HCT116 (cell line): ENCODE measurements at regions of chr16 and their contacts with region 1.

Region 1: DNA sequence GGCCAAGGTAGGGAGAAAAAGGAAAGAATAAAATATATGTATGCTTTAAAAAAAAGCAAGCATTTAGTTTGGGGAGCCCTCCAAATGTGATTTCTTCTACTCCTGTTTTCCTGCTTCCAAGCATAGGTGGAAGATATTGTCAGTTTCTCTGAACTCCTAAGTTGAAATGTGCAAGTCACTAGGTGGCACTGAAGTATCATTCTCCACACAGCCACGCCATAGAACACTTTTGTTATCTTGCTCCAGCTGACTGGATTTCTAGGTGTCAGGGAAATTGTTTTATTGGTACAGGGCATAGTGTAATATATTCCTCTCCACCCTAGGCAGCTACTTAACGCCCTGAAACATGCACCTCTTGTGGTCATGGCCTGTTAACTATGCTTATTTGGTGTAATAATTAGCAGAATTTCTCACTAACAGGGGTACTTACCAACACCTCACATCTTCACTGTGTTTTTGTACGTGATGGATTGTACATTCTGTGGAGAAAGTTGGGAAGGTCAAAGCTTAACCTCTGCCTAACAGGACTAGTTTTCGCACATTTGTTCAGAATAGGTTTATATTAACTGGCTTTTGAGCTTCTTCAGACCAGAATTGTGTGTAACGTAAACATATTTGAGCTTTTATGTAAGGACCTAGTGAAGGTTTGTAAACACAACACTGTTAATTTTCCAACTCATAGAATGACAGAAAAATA is 69.3 kb downstream of the FTO start:
- DNase-seq: no peak
- ATAC-seq: peak; percentile 51
- H3K4me3 ChIP-seq: no peak overlapping the region
- H3K27ac ChIP-seq: no peak overlapping the region
- H3K4me1 ChIP-seq: peaks cover 32 to 40% of the 10 kb centered on the region in 2 experiments
- H3K27me3 ChIP-seq: no peaks in the 10 kb centered on the region
- CTCF ChIP-seq: peak; percentile 46 to 68 (median 56); a peak in 4 of 6 replicates
- POLR2A ChIP-seq: no peak
- RAD21 ChIP-seq: peak; percentile 91

Region 2: DNA sequence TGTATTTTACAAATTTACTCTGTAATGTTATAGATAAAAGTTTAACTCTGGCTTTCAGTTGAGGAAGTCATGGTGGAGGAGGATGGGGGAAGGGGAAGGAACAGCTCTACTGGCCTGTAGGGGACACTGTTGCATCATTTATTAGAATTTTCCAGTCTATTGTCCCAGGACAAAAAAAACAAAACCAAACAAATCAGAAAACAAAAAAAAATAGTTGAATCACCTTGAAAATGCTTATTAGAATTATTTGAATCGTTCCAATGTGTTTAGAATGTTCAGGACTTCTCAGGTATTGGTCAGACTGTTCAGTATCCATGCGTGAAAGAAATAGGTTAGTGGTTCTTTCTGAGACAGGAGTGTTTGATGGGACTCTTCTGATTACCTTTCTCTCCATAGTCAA is 172.7 kb after region 1 on chr16:
- CTCF ChIA-PET with region 1: interaction called, 3 read pairs
- POLR2A ChIA-PET with region 1: no interaction called
- RAD21 ChIA-PET with region 1: no interaction called
- intact Hi-C with region 1: loop called (anchors 1 kb)
- DNase-seq: peak; percentile 8
- ATAC-seq: peak; percentile 65; the same call in 1 of the 2 replicates
- H3K4me3 ChIP-seq: no peak overlapping the region
- H3K27ac ChIP-seq: no peak overlapping the region
- H3K4me1 ChIP-seq: no peaks in the 10 kb centered on the region
- H3K27me3 ChIP-seq: no peaks in the 10 kb centered on the region
- CTCF ChIP-seq: peak; percentile 36 to 86 (median 66); a peak in 5 of 6 replicates
- POLR2A ChIP-seq: no peak
- RAD21 ChIP-seq: peak; percentile 68

Region 3: DNA sequence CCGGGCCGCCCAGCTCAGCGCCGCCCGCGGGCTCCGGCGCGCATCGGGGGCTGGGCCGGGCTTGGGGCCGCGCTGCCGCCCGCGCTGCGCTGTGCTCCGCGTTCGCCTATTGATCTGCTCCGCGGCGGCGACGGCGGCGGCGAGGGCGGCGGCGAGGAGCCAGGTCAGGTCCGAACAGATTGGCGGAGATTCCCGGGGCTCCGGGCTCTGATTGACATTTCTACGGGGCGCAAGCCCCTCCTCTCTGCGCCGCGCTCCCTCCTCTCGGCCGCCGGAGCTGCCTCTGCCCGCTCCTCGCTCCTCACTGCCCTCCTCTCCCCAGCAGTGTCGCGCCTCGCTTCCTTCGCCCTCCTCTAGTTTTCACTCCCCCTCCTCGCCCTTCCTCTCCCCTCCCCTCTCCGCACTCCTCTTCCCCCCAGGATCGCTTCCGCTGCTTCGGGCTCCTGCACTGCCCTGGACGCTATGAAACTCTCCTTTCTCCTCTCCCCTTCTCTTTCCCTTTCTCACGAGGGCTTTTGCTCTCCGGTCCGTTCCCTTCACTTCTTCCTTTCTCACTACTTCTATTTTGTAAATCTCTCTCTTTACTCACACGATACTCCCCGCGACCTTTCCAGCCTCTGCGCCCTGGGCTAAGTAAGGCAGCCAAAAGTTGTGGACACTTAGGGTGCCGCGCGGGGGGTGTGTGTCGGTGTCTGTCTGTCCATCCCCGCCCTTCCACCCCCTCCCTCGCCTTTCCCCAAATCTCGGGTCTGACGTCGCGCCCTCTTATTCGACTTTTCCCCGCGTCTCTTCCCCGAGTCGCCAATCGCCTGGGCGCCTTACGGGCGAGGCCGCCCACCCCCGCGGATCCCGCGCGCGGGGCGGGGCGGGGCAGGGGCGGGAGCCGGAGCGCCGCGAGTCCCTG is 513.0 kb after region 1 on chr16 and contains the start of gene IRX3:
- CTCF ChIA-PET with region 1: no interaction called
- POLR2A ChIA-PET with region 1: no interaction called
- RAD21 ChIA-PET with region 1: no interaction called
- intact Hi-C with region 1: loop called (anchors 10 kb)
- DNase-seq: peak; percentile 66
- ATAC-seq: peak; percentile 90
- H3K4me3 ChIP-seq: peak within 1 kb of the TSS; percentile 56 to 71
- H3K27ac ChIP-seq: peak within 1 kb of the TSS; percentile 60; the same call in 1 of the 2 replicates
- H3K4me1 ChIP-seq: peaks cover 7 to 22% of the 10 kb centered on the region in 2 experiments
- H3K27me3 ChIP-seq: no peaks in the 10 kb centered on the region
- CTCF ChIP-seq: no peak
- POLR2A ChIP-seq: no peak
- RAD21 ChIP-seq: no peak
- total RNA-seq, gene IRX3: 2.0 TPM

Region 4: GRCh38 chr16:54812229-54812628 is 1038.9 kb after region 1 on chr16:
- CTCF ChIA-PET with region 1: no interaction called
- POLR2A ChIA-PET with region 1: no interaction called
- RAD21 ChIA-PET with region 1: no interaction called
- intact Hi-C with region 1: loop called (anchors 5 kb)
- DNase-seq: no peak
- ATAC-seq: no peak
- H3K4me3 ChIP-seq: no peak overlapping the region
- H3K27ac ChIP-seq: no peak overlapping the region
- H3K4me1 ChIP-seq: no peaks in the 10 kb centered on the region
- H3K27me3 ChIP-seq: peaks cover 44% of the 10 kb centered on the region
- CTCF ChIP-seq: peak in 2 of 3 experiments; percentile 16 to 24; a peak in 1 of 6 replicates
- POLR2A ChIP-seq: no peak
- RAD21 ChIP-seq: peak; percentile 27; the same call in 1 of the 2 replicates

Region 5: GRCh38 chr16:55021595-55022475 is 1248.5 kb after region 1 on chr16:
- CTCF ChIA-PET with region 1: interaction called, 5 read pairs
- POLR2A ChIA-PET with region 1: no interaction called
- RAD21 ChIA-PET with region 1: no interaction called
- intact Hi-C with region 1: loop called (anchors 10 kb)
- DNase-seq: peak; percentile 67
- ATAC-seq: peak; percentile 97
- H3K4me3 ChIP-seq: no peak overlapping the region; a peak in 1 of 4 replicates
- H3K27ac ChIP-seq: peak overlapping the region; percentile 27; the same call in 1 of the 2 replicates
- H3K4me1 ChIP-seq: peaks cover 7 to 12% of the 10 kb centered on the region in 2 experiments; a peak in 3 of 4 replicates
- H3K27me3 ChIP-seq: no peaks in the 10 kb centered on the region
- CTCF ChIP-seq: peak; percentile 34 to 67 (median 66); a peak in 5 of 6 replicates
- POLR2A ChIP-seq: no peak
- RAD21 ChIP-seq: peak; percentile 30; the same call in 1 of the 2 replicates

Region 6: DNA sequence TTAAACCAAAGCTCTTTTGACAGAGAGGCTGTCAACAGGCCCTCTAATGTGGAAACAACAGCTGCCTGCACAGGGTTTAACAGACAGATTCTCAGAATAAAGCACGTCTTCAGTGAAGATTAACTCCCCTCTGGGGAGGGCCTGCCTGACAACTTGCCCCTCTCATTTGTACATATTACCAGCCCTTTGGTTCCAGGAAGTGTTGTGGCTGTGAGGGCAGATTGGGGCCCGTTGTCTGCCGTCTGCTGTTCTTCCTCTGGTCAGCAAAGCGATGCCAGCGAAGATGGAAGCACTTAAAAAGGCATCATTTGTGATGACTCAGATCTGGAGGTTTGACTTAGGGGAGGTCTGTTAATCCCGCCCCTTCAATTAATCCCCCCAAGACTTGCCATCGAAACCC is 1373.7 kb after region 1 on chr16:
- CTCF ChIA-PET with region 1: no interaction called
- POLR2A ChIA-PET with region 1: no interaction called
- RAD21 ChIA-PET with region 1: no interaction called
- intact Hi-C with region 1: no loop called
- DNase-seq: no peak
- ATAC-seq: no peak
- H3K4me3 ChIP-seq: no peak overlapping the region
- H3K27ac ChIP-seq: no peak overlapping the region
- H3K4me1 ChIP-seq: no peaks in the 10 kb centered on the region
- H3K27me3 ChIP-seq: peaks cover 39% of the 10 kb centered on the region; the same call in 1 of the 2 replicates
- CTCF ChIP-seq: no peak
- POLR2A ChIP-seq: no peak
- RAD21 ChIP-seq: no peak